Thyroid gland (tissue), 4 donors: ENCODE measurements at regions of chr14 and their contacts with region 1.

Region 1: GRCh38 chr14:21269252-21270046 is at the start of gene HNRNPC:
- DNase-seq: peak; percentile 100
- H3K4me3 ChIP-seq: peak within 1 kb of the TSS; percentile 58 to 100 (median 77)
- H3K27ac ChIP-seq: peak within 1 kb of the TSS; percentile 93 to 96 (median 96)
- H3K4me1 ChIP-seq: peaks cover 19 to 24% of the 10 kb centered on the region in 2 donors
- H3K27me3 ChIP-seq: no peaks in the 10 kb centered on the region
- CTCF ChIP-seq: no peak
- POLR2A ChIP-seq: peak; percentile 66 to 95
- total RNA-seq, gene HNRNPC: 380 to 454 (median 419) TPM

Region 2: DNA sequence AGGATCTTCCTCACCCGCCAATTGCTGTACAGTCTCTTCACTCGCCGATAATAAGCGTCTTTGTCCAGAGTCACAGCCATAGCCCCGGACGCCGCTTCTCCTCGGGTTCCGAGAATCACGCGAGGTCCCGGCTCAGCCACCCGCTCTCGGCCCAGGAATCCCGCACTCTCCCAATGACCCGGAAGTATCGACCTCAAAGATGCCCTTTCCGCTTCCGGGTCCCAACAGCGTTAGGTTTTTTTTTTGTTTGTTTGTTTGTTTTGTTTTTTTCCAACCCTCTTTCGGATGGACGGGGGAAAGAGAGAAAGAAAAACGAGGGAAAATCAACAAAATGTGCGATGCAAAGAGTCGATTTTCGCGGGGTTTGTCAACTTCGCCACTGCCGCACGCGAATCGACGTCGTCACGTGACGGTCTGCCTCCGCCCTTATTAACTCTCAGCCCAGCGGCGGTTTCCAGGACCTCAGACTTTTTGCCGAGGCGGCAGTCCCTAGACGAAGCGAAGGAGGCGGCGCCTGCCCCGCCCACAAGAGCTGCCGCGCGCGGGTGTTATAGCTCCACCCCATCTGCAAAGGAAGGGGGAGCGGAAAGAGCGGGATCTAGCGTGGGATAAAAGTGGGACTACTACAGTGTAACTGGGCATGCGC is 114.5 kb after region 1 on chr14 and contains the start of gene SUPT16H:
- intact Hi-C with region 1: loop called (anchors 10 kb)
- DNase-seq: peak; percentile 97
- H3K4me3 ChIP-seq: peak within 1 kb of the TSS; percentile 12 to 75 (median 60)
- H3K27ac ChIP-seq: peak within 1 kb of the TSS; percentile 62 to 88 (median 78)
- H3K4me1 ChIP-seq: peaks cover 13 to 17% of the 10 kb centered on the region in 2 donors
- H3K27me3 ChIP-seq: no peaks in the 10 kb centered on the region
- CTCF ChIP-seq: peak in 1 of 6 experiments; percentile 11
- POLR2A ChIP-seq: peak in 1 of 2 donors; percentile 52
- total RNA-seq, gene SUPT16H: 58.4 to 87.0 (median 69.9) TPM

Region 3: DNA sequence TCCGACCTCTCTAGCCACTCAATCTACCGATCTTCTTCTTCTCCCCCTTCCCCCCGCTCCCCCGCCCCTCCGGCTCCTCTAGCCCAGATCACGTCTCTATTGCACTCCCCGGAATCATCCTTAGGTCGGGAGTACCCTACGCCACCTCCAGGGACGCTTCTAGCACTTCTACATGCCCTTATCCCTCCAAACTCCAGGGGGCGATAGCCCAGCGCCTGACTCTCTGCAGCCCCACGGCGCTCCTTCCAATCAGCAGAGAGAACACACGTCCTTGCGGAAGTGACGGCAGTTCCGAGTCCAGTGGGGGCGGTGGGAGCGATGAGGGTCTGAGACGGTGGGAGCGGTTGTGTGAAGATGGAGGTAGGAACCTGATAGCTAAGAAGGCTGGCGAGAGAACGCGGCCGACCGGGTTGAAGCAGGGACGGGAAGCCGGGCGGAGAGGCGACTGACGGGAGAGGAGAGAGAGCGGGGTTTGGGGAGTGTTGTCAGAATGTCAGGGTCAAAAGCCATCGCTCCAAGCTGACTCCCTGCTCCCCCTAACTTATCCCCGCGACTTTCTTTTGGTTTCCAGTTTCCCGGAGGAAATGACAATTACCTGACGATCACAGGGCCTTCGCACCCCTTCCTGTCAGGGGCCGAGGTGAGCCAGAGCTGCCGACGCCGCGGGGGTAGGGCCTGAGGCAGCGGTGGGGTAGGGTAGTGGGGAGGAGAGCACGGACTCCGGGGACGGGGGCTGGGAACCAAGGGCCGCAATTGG is 207.7 kb after region 1 on chr14 and contains the starts of genes RAB2B and TOX4:
- intact Hi-C with region 1: loop called (anchors 5 kb)
- DNase-seq: peak; percentile 97
- H3K4me3 ChIP-seq: peak within 1 kb of the TSS; percentile 83 to 99 (median 96)
- H3K27ac ChIP-seq: peak within 1 kb of the TSS; percentile 80 to 88 (median 84)
- H3K4me1 ChIP-seq: peaks cover 17% of the 10 kb centered on the region in 2 donors
- H3K27me3 ChIP-seq: no peaks in the 10 kb centered on the region
- CTCF ChIP-seq: peak; percentile 88 to 100 (median 98)
- POLR2A ChIP-seq: peak in 1 of 2 donors; percentile 58
- total RNA-seq, gene RAB2B: 26.8 to 66.8 (median 38.9) TPM
- total RNA-seq, gene TOX4: 41.5 to 68.2 (median 52.7) TPM